ENCODE measurements at regions of chr17 and their contacts with region 1.

Region 1: GRCh38 chr17:34199932-34200534 is 55.1 kb upstream of the CCL2 start:
- DNase-seq: peak; percentile 92
- H3K4me3 Mint-ChIP-seq: no peak overlapping the region
- H3K27ac Mint-ChIP-seq: no peak overlapping the region
- H3K4me1 Mint-ChIP-seq: peaks cover 11% of the 10 kb centered on the region
- H3K27me3 Mint-ChIP-seq: peaks cover 48% of the 10 kb centered on the region

Region 2: DNA sequence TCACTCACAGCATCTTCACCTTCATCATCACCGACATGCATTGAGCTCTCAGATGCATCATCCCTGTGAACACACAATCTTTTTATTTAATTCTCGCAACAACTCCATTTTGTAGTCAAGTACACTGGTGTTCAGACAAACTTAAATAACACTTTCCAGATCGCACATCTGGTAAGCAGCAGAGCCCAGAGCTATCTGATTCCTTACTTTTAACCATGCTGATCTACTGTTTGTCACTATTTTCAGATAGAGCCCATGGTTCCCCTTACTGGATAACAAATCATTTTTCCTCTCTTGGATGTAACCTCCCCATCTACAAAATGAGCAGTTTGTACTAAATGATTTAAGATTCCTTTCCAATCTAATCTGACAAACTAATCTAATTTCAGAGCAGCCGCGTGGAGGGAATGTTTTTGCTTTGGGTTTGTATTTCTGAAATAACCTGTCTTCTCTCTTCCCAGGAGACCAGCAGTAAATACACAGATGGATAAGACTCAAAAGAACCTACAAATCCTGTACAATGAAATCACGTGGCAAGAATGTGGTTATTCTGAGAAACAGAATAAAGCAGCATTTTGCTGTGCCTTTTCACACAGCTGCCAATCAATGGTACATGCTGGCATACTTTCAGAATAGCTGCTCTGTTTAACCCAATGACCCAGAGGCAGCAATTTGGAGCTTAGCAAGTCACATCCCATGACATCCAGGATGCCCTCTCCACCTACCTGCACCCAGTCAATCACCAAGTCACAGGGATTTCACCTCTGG is 17.8 kb before region 1 on chr17:
- intact Hi-C with region 1: no loop called
- DNase-seq: no peak
- H3K4me3 Mint-ChIP-seq: no peak overlapping the region
- H3K27ac Mint-ChIP-seq: no peak overlapping the region
- H3K4me1 Mint-ChIP-seq: peaks cover 4% of the 10 kb centered on the region
- H3K27me3 Mint-ChIP-seq: peaks cover 25% of the 10 kb centered on the region

Region 3: GRCh38 chr17:34261568-34262337 is 61.7 kb after region 1 on chr17:
- intact Hi-C with region 1: loop called (anchors 5 kb)
- DNase-seq: peak; percentile 59
- H3K4me3 Mint-ChIP-seq: no peak overlapping the region
- H3K27ac Mint-ChIP-seq: no peak overlapping the region
- H3K4me1 Mint-ChIP-seq: peaks cover 7% of the 10 kb centered on the region
- H3K27me3 Mint-ChIP-seq: peaks cover 28% of the 10 kb centered on the region

Region 4: DNA sequence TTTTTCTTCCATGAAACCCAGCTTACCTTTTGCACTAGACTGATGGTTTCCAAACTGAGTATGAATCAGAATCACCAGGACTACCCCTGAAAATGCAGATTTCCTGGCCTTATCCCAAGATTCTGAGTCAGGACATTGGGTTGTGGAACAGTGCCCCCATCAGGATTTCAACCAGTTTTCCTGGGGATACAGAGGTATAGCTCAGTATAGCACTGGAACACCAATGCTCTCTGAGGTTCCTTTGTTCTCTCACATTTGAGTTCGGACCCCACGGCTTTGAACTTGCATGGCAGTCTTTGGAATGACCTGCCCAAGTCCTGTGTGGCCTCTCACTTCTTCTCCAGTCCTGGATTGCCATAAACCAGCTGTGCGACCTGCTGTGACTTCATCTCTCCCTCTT is 106.4 kb after region 1 on chr17:
- intact Hi-C with region 1: loop called (anchors 5 kb)
- DNase-seq: peak; percentile 36
- H3K4me3 Mint-ChIP-seq: no peak overlapping the region
- H3K27ac Mint-ChIP-seq: no peak overlapping the region
- H3K4me1 Mint-ChIP-seq: peaks cover 35% of the 10 kb centered on the region
- H3K27me3 Mint-ChIP-seq: peaks cover 13% of the 10 kb centered on the region

Region 5: GRCh38 chr17:34361478-34362061 is 161.5 kb after region 1 on chr17:
- intact Hi-C with region 1: loop called (anchors 1 kb)
- DNase-seq: peak; percentile 95
- H3K4me3 Mint-ChIP-seq: peak overlapping the region; percentile 56
- H3K27ac Mint-ChIP-seq: peak overlapping the region; percentile 6
- H3K4me1 Mint-ChIP-seq: peaks cover 44% of the 10 kb centered on the region
- H3K27me3 Mint-ChIP-seq: peaks cover 22% of the 10 kb centered on the region

Region 6: DNA sequence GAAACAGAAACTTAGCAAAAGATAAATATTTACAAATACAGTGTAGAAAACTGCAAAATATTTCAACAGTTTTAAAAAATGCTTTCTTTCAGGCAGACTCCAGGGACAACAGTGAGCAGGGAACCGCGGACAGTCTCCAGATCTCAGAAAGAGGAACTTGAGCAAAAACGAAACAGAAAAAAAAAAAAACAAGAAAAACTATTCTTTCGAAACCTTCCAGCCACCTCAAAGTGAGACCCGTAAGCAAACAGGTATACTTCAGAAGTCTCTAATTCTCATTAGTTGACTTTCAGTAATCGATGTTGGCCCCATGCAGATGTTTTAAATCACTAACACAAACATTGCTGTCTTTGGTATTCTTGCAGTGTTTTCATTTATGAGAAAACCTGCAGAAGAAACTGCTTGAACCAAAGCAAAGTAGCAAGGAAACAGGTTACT is 178.7 kb after region 1 on chr17:
- intact Hi-C with region 1: loop called (anchors 5 kb)
- DNase-seq: peak; percentile 79
- H3K4me3 Mint-ChIP-seq: peak overlapping the region; percentile 71
- H3K27ac Mint-ChIP-seq: peak overlapping the region; percentile 59
- H3K4me1 Mint-ChIP-seq: peaks cover 64% of the 10 kb centered on the region
- H3K27me3 Mint-ChIP-seq: peaks cover 4% of the 10 kb centered on the region

Region 7: GRCh38 chr17:34637548-34638525 is 437.8 kb after region 1 on chr17:
- intact Hi-C with region 1: loop called (anchors 1 kb)
- DNase-seq: peak; percentile 93
- H3K4me3 Mint-ChIP-seq: peak overlapping the region; percentile 35
- H3K27ac Mint-ChIP-seq: no peak overlapping the region
- H3K4me1 Mint-ChIP-seq: no peaks in the 10 kb centered on the region
- H3K27me3 Mint-ChIP-seq: peaks cover 35% of the 10 kb centered on the region